ENCODE measurements at regions of chr11 and their contacts with region 1.

Region 1: GRCh38 chr11:64284048-64284961 is at the start of gene BAD:
- DNase-seq: peak; percentile 97
- ATAC-seq: peak; percentile 88
- H3K4me3 Mint-ChIP-seq: peak within 1 kb of the TSS; percentile 77
- H3K27ac Mint-ChIP-seq: peak within 1 kb of the TSS; percentile 85
- H3K4me1 Mint-ChIP-seq: peaks cover 18% of the 10 kb centered on the region
- H3K27me3 Mint-ChIP-seq: no peaks in the 10 kb centered on the region
- total RNA-seq, gene BAD: 21.3 to 22.9 TPM

Region 2: GRCh38 chr11:63866211-63866610 is 418.1 kb before region 1 on chr11:
- CTCF ChIA-PET with region 1: no interaction called
- POLR2A ChIA-PET with region 1: interaction called, 14 read pairs
- intact Hi-C with region 1: no loop called
- DNase-seq: peak; percentile 92
- ATAC-seq: peak; percentile 81
- H3K4me3 Mint-ChIP-seq: peak overlapping the region; percentile 28
- H3K27ac Mint-ChIP-seq: peak overlapping the region; percentile 62
- H3K4me1 Mint-ChIP-seq: peaks cover 79% of the 10 kb centered on the region
- H3K27me3 Mint-ChIP-seq: no peaks in the 10 kb centered on the region

Region 3: GRCh38 chr11:63986156-63986931 is 298.0 kb before region 1 on chr11 and contains the start of gene OTUB1:
- CTCF ChIA-PET with region 1: no interaction called
- POLR2A ChIA-PET with region 1: no interaction called
- intact Hi-C with region 1: loop called in 1 of 2 experiments (anchors 2 kb)
- DNase-seq: peak; percentile 94
- ATAC-seq: peak; percentile 92
- H3K4me3 Mint-ChIP-seq: peak within 1 kb of the TSS; percentile 93
- H3K27ac Mint-ChIP-seq: peak within 1 kb of the TSS; percentile 89
- H3K4me1 Mint-ChIP-seq: peaks cover 23% of the 10 kb centered on the region
- H3K27me3 Mint-ChIP-seq: no peaks in the 10 kb centered on the region
- total RNA-seq, gene OTUB1: 77.4 to 86.1 TPM

Region 4: DNA sequence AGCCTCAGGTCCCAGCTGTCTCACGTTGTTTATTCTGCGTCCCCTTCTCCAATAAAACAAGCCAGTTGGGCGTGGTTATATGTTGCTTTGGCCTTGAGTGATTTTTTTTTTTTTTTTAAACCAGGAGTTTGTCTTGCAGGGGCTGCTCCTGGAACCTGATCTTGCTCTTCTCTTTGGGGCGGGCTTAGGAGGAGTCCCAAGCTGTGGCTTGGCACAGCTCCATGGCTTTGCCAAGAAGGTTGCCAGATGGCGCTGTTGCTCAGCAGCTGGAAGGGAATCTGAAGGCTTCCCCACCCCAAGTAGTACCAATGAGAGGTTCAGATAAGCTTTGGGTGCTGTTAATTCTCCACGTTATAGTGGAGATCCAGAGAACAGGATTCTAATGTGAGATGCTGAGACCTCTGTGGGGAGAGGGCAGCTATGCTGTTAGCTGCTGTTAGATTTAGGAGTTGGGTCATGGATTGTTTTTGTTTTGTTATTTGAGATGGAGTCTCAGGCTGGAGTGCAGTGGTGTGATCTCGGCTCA is 79.8 kb before region 1 on chr11:
- CTCF ChIA-PET with region 1: interaction called, 5 read pairs
- POLR2A ChIA-PET with region 1: no interaction called
- intact Hi-C with region 1: loop called in 1 of 2 experiments (anchors 1 kb)
- DNase-seq: peak; percentile 90
- ATAC-seq: peak; percentile 30
- H3K4me3 Mint-ChIP-seq: peak overlapping the region; percentile 33
- H3K27ac Mint-ChIP-seq: peak overlapping the region; percentile 79
- H3K4me1 Mint-ChIP-seq: peaks cover 41% of the 10 kb centered on the region
- H3K27me3 Mint-ChIP-seq: no peaks in the 10 kb centered on the region

Region 5: GRCh38 chr11:64240394-64241174 is 43.7 kb before region 1 on chr11 and contains the start of gene FKBP2:
- CTCF ChIA-PET with region 1: no interaction called
- POLR2A ChIA-PET with region 1: no interaction called
- intact Hi-C with region 1: loop called (anchors 1 to 2 kb)
- DNase-seq: peak; percentile 99
- ATAC-seq: peak; percentile 68
- H3K4me3 Mint-ChIP-seq: peak within 1 kb of the TSS; percentile 86
- H3K27ac Mint-ChIP-seq: peak within 1 kb of the TSS; percentile 99
- H3K4me1 Mint-ChIP-seq: peaks cover 31% of the 10 kb centered on the region
- H3K27me3 Mint-ChIP-seq: no peaks in the 10 kb centered on the region
- total RNA-seq, gene FKBP2: 19.9 to 21.3 TPM

Region 6: DNA sequence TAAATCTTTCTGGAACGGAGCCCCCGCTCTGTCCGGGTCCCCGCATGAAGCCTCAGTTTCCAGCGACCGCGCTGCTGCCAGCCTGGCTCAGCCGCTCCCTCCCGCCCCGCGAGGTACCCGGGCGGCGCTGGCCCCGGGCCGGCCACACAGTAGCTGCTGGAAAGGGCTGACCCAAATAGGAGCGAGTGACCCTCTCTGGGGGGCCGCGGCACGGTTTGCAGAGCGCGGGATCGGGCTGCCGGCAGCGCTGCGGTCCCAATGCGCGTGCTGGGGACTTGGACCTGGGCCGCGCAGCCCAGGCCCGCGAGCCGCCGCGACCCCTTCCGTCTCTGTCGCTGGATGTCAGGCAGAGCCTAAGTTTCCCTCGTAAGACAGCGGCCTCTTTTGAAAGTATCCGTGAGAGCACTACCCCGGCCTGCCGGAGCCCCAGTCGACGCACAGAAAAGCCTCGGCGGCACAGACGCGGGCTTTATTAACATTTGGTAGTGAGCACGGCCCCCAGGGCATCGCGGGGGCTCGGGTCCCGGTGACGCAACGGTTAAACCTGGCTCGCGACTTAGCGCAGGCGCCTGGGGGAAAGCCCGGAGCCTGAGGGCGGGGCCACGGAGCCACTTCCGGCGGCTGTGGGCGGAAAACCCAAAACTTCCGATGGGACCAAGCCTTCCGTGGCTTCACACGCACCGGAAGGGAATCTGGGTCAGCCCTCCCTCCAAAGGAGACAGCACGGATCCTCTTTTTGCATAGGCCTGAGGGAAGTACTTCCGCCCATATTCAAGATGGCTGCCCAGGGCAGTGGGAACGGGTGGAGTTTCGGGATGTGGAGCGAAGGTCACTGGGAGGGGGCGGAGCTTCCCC is 14.7 kb before region 1 on chr11:
- CTCF ChIA-PET with region 1: interaction called, 8 read pairs
- POLR2A ChIA-PET with region 1: interaction called, 12 read pairs
- intact Hi-C with region 1: loop called (anchors 1 kb)
- DNase-seq: peak; percentile 98
- ATAC-seq: peak; percentile 82
- H3K4me3 Mint-ChIP-seq: peak overlapping the region; percentile 98
- H3K27ac Mint-ChIP-seq: peak overlapping the region; percentile 96
- H3K4me1 Mint-ChIP-seq: peaks cover 19% of the 10 kb centered on the region
- H3K27me3 Mint-ChIP-seq: no peaks in the 10 kb centered on the region

Region 7: DNA sequence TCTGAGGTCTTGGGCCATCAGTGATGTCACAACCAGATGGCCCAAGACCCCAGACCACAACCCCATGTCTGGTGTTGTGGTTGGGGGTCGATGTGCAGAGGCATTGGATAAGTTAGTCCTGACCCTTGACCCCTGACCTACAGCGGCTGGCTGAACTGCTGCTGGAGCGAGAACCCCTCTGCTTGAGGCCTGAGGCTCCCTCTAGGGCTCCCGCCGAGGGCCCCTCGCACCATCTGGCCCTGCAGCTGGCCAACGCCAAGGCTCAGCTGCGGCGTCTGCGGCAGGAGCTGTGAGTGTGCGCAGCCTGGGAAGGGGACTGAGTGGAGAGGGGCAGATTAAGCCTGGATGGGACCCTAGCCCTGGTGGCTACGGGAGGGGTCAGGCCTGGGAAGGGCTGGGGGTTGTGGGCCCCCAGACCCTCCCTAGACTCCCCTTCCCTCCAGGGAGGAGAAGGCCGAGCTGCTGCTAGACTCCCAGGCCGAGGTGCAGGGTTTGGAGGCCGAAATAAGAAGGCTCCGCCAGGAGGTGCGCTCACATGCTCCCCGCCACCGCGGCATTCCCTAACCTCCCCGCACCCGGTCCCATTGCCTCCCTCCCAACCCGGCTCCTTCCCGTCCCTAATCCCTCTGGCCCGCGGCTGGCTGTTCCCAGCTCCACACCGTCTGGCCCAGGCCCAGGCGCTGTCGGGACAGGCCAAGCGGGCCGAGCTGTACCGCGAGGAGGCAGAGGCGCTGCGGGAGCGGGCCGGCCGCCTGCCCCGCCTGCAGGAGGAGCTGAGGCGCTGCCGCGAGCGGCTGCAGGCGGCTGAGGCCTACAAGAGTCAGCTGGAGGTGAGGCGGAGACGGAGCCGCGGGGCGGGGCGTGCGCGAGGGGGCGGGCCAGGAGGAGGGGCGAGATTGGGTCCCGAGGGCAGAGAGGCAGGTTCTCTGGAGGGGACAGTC is 57.8 kb after region 1 on chr11:
- CTCF ChIA-PET with region 1: interaction called, 5 read pairs
- POLR2A ChIA-PET with region 1: no interaction called
- intact Hi-C with region 1: loop called in 1 of 2 experiments (anchors 1 kb)
- DNase-seq: peak; percentile 96
- ATAC-seq: peak; percentile 77
- H3K4me3 Mint-ChIP-seq: no peak overlapping the region
- H3K27ac Mint-ChIP-seq: no peak overlapping the region
- H3K4me1 Mint-ChIP-seq: peaks cover 28% of the 10 kb centered on the region
- H3K27me3 Mint-ChIP-seq: no peaks in the 10 kb centered on the region

Region 8: DNA sequence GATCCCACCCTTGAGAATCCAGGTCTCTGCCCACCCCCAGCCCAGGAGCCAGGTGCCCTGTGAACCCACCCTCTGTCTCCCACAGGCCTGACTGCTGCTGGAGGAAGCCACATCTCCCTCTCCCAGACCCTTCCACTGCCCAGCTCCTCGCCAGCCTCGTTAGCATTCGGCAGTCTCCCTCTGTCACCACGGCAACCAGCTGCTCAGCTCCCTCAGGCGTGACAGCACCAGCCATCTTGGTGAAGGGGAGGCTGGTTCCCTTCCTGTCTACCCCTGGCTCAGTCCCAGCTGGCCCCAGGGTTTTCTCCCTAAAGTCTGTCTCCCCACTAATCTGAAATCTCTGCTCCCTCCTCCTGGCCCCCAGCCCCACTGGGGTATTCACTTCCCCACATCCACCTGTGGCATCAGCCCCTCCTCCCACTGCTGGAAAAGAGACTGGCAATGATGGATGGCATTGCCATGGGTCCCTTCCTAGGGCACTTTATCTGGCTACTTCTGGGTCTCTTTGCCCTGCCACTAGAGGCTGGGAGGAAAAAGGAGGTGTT is 410.6 kb after region 1 on chr11:
- CTCF ChIA-PET with region 1: no interaction called
- POLR2A ChIA-PET with region 1: no interaction called
- intact Hi-C with region 1: no loop called
- DNase-seq: no peak
- ATAC-seq: no peak
- H3K4me3 Mint-ChIP-seq: no peak overlapping the region
- H3K27ac Mint-ChIP-seq: no peak overlapping the region
- H3K4me1 Mint-ChIP-seq: peaks cover 11% of the 10 kb centered on the region
- H3K27me3 Mint-ChIP-seq: peaks cover 23% of the 10 kb centered on the region